Activated T-helper 2 cell treated with anti-CD3 and anti-CD28 coated beads, Interferon-gamma antibody, Interleukin-2, Interleukin-4, amounts not matched to agents 10 μg/mL and 5 μg/mL and 100 μg/mL, durations not matched to agents 14 hours and 24 hours and 36 hours (primary cell): ENCODE measurements at regions of chr5 and their contacts with region 1.

Region 1: GRCh38 chr5:179697993-179698934 is 503 bp upstream of the CANX start:
- DNase-seq: peak; percentile 99
- H3K4me3 Mint-ChIP-seq: peak overlapping the region; percentile 99
- H3K27ac Mint-ChIP-seq: peak overlapping the region; percentile 100
- H3K4me1 Mint-ChIP-seq: peaks cover 28% of the 10 kb centered on the region
- H3K27me3 Mint-ChIP-seq: no peaks in the 10 kb centered on the region

Region 2: GRCh38 chr5:179678223-179679013 is 19.8 kb before region 1 on chr5:
- intact Hi-C with region 1: loop called (anchors 1 kb)
- DNase-seq: peak; percentile 93
- H3K4me3 Mint-ChIP-seq: peak overlapping the region; percentile 96
- H3K27ac Mint-ChIP-seq: peak overlapping the region; percentile 96
- H3K4me1 Mint-ChIP-seq: peaks cover 27% of the 10 kb centered on the region
- H3K27me3 Mint-ChIP-seq: no peaks in the 10 kb centered on the region